ENCODE measurements at regions of chr1 and their contacts with region 1.

Region 1: GRCh38 chr1:207958376-207959139 is 47.6 kb upstream of the CD34 start:
- DNase-seq: no peak
- CTCF ChIP-seq: no peak

Region 2: DNA sequence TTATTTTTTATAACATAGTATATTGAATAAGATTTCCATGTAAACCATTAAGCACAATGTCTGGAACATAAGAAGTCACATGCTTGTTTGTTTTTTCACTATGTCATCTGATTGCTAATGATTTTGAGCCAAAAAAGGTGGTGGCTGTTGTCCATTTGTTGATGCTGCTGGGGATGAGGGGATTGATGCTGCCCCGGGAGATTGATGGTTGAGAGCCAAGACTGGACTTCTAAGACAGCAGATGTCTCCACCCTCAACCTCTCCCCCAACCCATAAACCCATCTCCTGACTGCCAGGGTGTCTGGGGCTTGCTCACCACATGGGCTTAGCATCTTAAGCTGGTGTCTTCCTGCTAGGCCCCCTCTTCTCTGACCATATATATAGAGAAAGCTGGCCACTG is 11.8 kb before region 1 on chr1:
- CTCF ChIA-PET with region 1: interaction called, 56 read pairs
- POLR2A ChIA-PET with region 1: no interaction called
- DNase-seq: no peak
- CTCF ChIP-seq: no peak